Naive thymus-derived CD4-positive, alpha-beta T cell (primary cell): ENCODE measurements at regions of chr2 and their contacts with region 1.

Region 1: GRCh38 chr2:9423100-9423921 is at the starts of genes CPSF3 and ITGB1BP1:
- DNase-seq: peak; percentile 88 to 98 (median 94)
- ATAC-seq: peak; percentile 92
- H3K4me3 ChIP-seq: peak within 1 kb of the TSS; percentile 90
- H3K4me3 Mint-ChIP-seq: peak within 1 kb of the TSS in 5 of 10 donors; percentile 87 to 95 (median 92)
- H3K27ac ChIP-seq: peak within 1 kb of the TSS; percentile 84
- H3K27ac Mint-ChIP-seq: peak within 1 kb of the TSS in 8 of 9 donors; percentile 82 to 97 (median 92)
- H3K4me1 ChIP-seq: peaks cover 22 to 24% of the 10 kb centered on the region in 2 donors
- H3K4me1 Mint-ChIP-seq: peaks cover 20 to 41% (median 28%) of the 10 kb centered on the region in 7 donors
- H3K27me3 ChIP-seq: no peaks in the 10 kb centered on the region
- H3K27me3 Mint-ChIP-seq: no peaks in the 10 kb centered on the region
- total RNA-seq, gene CPSF3: 18.0 to 47.8 (median 21.7) TPM
- total RNA-seq, gene ITGB1BP1: 45.1 to 107 (median 54.3) TPM

Region 2: DNA sequence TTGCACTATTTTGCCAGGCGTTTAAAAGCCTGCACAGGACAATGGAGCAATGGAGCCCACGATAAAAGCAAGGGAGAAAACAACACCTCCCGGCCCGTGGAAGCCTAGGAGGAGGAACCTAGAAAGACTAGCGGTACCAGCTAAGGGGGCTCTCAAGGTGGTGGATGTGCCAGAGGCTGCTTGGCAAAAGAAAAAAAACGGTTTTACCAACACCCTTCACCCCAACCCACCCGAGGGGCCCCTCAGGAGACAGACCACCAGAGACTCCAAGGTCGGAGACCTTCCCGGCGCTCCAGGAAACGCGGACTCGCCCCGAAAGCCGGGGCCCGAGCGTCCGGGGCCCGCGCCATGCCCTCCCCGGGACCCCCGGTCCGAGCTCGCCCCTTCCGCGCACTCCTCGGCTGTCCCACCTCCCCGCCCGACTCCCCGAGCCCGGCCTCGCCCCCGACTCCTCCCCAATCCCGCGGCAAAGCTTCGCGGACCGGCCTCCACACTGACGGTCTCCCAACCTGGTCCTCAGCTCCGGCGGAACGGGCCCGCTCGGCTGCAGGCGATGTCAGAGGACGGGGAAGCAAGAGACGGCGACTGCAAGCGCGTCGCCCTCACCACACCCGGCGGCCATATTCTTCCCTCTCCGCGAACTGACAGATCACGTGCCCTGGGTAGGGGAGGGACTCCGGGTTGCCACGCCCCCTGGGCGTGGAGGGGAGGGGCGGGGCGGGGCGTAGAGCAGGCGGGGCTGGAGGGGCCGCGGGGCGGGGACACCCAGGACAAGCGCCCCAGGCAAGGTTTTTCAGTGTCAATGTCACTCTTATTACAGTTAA is 586.1 kb before region 1 on chr2 and contains the start of gene KIDINS220:
- CTCF ChIA-PET with region 1: no interaction called
- POLR2A ChIA-PET with region 1: no interaction called
- intact Hi-C with region 1: loop called (anchors 5 kb)
- DNase-seq: peak; percentile 71 to 87 (median 82)
- ATAC-seq: peak; percentile 99
- H3K4me3 ChIP-seq: peak within 1 kb of the TSS; percentile 69
- H3K4me3 Mint-ChIP-seq: peak within 1 kb of the TSS; percentile 96 to 100 (median 99)
- H3K27ac ChIP-seq: peak within 1 kb of the TSS; percentile 78
- H3K27ac Mint-ChIP-seq: peak within 1 kb of the TSS; percentile 94 to 100 (median 98)
- H3K4me1 ChIP-seq: peaks cover 23 to 29% of the 10 kb centered on the region in 2 donors
- H3K4me1 Mint-ChIP-seq: peaks cover 26 to 60% (median 51%) of the 10 kb centered on the region in 7 donors
- H3K27me3 ChIP-seq: no peaks in the 10 kb centered on the region
- H3K27me3 Mint-ChIP-seq: peaks cover 0 to 5% (median 0%) of the 10 kb centered on the region in 5 donors
- total RNA-seq, gene KIDINS220: 34.5 to 54.3 (median 48.3) TPM

Region 3: GRCh38 chr2:9003616-9004337 is 419.5 kb before region 1 on chr2 and contains the start of gene MBOAT2:
- CTCF ChIA-PET with region 1: no interaction called
- POLR2A ChIA-PET with region 1: no interaction called
- intact Hi-C with region 1: loop called in 1 of 2 experiments (anchors 5 kb)
- DNase-seq: peak; percentile 60 to 84 (median 71)
- ATAC-seq: peak; percentile 92
- H3K4me3 ChIP-seq: peak within 1 kb of the TSS; percentile 60
- H3K4me3 Mint-ChIP-seq: peak within 1 kb of the TSS; percentile 77 to 92 (median 86)
- H3K27ac ChIP-seq: peak within 1 kb of the TSS; percentile 62
- H3K27ac Mint-ChIP-seq: peak within 1 kb of the TSS in 8 of 9 donors; percentile 56 to 86 (median 76)
- H3K4me1 ChIP-seq: peaks cover 0 to 3% of the 10 kb centered on the region in 2 donors
- H3K4me1 Mint-ChIP-seq: peaks cover 13 to 25% (median 22%) of the 10 kb centered on the region in 7 donors
- H3K27me3 ChIP-seq: peaks cover 0 to 3% of the 10 kb centered on the region in 2 donors
- H3K27me3 Mint-ChIP-seq: peaks cover 0 to 18% (median 4%) of the 10 kb centered on the region in 5 donors
- total RNA-seq, gene MBOAT2: 1.4 to 6.0 (median 2.3) TPM

Region 4: DNA sequence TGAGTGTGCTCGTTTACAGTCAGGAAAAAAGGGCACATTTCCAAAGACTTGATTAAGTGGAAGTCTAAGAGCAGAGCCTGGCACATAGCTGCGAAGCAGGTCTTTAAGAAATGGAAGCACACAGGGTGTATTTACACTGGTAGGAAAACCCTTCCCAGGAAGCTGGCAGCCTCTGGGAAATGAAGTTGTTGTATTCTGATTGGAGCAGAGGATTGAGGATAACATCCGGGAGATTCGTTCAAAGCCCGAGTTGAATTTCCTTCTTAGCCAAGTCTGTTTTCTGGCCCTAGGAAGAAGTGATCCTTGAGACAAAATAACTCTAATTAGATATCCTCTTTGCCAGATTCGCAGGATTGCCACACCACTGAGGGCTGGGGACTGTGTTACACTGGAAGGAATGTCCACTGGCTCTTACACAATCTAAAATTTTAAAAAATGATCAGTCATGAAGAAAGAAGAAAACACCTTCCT is 75.9 kb before region 1 on chr2:
- CTCF ChIA-PET with region 1: no interaction called
- POLR2A ChIA-PET with region 1: no interaction called
- intact Hi-C with region 1: no loop called
- DNase-seq: no peak
- ATAC-seq: no peak
- H3K4me3 ChIP-seq: no peak overlapping the region
- H3K4me3 Mint-ChIP-seq: no peak overlapping the region
- H3K27ac ChIP-seq: no peak overlapping the region
- H3K27ac Mint-ChIP-seq: no peak overlapping the region
- H3K4me1 ChIP-seq: no peaks in the 10 kb centered on the region
- H3K4me1 Mint-ChIP-seq: no peaks in the 10 kb centered on the region
- H3K27me3 ChIP-seq: no peaks in the 10 kb centered on the region
- H3K27me3 Mint-ChIP-seq: peaks cover 0 to 23% (median 10%) of the 10 kb centered on the region in 5 donors

Region 5: GRCh38 chr2:9843229-9844035 is 420.1 kb after region 1 on chr2 and contains the start of gene TAF1B:
- CTCF ChIA-PET with region 1: no interaction called
- POLR2A ChIA-PET with region 1: interaction called, 3 read pairs
- intact Hi-C with region 1: loop called (anchors 1 kb)
- DNase-seq: peak; percentile 55 to 89 (median 80)
- ATAC-seq: peak; percentile 87
- H3K4me3 ChIP-seq: peak within 1 kb of the TSS; percentile 85
- H3K4me3 Mint-ChIP-seq: peak within 1 kb of the TSS; percentile 89 to 95 (median 93)
- H3K27ac ChIP-seq: peak within 1 kb of the TSS; percentile 72
- H3K27ac Mint-ChIP-seq: peak within 1 kb of the TSS; percentile 74 to 97 (median 92)
- H3K4me1 ChIP-seq: peaks cover 11 to 13% of the 10 kb centered on the region in 2 donors
- H3K4me1 Mint-ChIP-seq: peaks cover 25 to 56% (median 48%) of the 10 kb centered on the region in 7 donors
- H3K27me3 ChIP-seq: no peaks in the 10 kb centered on the region
- H3K27me3 Mint-ChIP-seq: peaks cover 0 to 6% (median 0%) of the 10 kb centered on the region in 5 donors
- total RNA-seq, gene TAF1B: 9.2 to 28.2 (median 20.9) TPM

Region 6: DNA sequence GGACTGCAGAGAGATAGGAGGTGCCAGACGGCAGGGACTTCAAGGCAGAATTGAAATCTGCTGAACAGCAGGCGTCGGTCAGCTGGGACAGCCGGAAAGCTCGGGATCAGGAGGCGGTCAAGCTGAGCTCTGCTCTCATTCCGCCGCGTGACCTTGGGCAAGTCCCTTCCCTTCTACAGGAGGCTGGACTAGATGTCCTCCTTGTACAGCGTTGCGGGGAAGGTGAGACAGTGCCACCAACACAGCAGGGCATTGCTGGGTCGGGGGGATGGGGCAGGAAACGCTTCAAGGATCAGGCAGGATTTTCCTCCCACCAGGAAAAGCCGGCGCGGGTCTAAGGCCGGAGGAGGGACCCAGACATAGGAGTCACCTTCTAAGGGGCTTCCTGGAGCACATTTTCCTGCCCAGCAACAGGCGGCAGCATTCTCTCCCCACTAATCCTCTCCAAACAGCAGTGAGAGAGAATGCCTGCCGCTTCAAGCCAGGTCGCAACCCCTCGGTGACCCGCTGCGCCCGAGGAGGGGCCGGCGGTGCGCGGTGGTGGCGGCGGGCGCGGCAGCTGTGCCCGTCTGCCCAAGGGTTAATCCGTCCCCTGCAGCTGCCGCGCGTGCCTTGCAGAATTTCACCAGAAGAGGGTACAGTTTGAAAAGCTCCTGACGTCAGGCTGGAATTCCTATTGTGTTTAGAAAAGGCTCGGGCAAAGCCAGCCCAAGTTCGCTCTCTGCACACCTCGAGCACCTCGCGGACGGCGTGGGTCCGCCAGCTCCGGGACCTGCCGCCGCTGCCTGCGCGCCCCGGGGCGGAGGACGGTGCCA is 1488.2 kb after region 1 on chr2 and contains the start of gene KCNF1:
- CTCF ChIA-PET with region 1: no interaction called
- POLR2A ChIA-PET with region 1: no interaction called
- intact Hi-C with region 1: no loop called
- DNase-seq: no peak
- ATAC-seq: no peak
- H3K4me3 ChIP-seq: no peak within 1 kb of the TSS
- H3K4me3 Mint-ChIP-seq: peak within 1 kb of the TSS in 8 of 10 donors; percentile 8 to 81 (median 48)
- H3K27ac ChIP-seq: no peak within 1 kb of the TSS
- H3K27ac Mint-ChIP-seq: peak within 1 kb of the TSS in 1 of 9 donors; percentile 1
- H3K4me1 ChIP-seq: no peaks in the 10 kb centered on the region
- H3K4me1 Mint-ChIP-seq: peaks cover 0 to 20% (median 5%) of the 10 kb centered on the region in 7 donors
- H3K27me3 ChIP-seq: no peaks in the 10 kb centered on the region
- H3K27me3 Mint-ChIP-seq: peaks cover 36 to 46% (median 42%) of the 10 kb centered on the region in 5 donors
- total RNA-seq, gene KCNF1: not detected

Region 7: GRCh38 chr2:11320698-11321492 is 1897.6 kb after region 1 on chr2:
- CTCF ChIA-PET with region 1: no interaction called
- POLR2A ChIA-PET with region 1: no interaction called
- intact Hi-C with region 1: no loop called
- DNase-seq: no peak
- ATAC-seq: no peak
- H3K4me3 ChIP-seq: no peak overlapping the region
- H3K4me3 Mint-ChIP-seq: no peak overlapping the region
- H3K27ac ChIP-seq: no peak overlapping the region
- H3K27ac Mint-ChIP-seq: no peak overlapping the region
- H3K4me1 ChIP-seq: no peaks in the 10 kb centered on the region
- H3K4me1 Mint-ChIP-seq: peaks cover 0 to 38% (median 21%) of the 10 kb centered on the region in 7 donors
- H3K27me3 ChIP-seq: no peaks in the 10 kb centered on the region
- H3K27me3 Mint-ChIP-seq: no peaks in the 10 kb centered on the region